CD8-positive, alpha-beta T cell (primary cell): ENCODE measurements at regions of chr11 and their contacts with region 1.

Region 1: DNA sequence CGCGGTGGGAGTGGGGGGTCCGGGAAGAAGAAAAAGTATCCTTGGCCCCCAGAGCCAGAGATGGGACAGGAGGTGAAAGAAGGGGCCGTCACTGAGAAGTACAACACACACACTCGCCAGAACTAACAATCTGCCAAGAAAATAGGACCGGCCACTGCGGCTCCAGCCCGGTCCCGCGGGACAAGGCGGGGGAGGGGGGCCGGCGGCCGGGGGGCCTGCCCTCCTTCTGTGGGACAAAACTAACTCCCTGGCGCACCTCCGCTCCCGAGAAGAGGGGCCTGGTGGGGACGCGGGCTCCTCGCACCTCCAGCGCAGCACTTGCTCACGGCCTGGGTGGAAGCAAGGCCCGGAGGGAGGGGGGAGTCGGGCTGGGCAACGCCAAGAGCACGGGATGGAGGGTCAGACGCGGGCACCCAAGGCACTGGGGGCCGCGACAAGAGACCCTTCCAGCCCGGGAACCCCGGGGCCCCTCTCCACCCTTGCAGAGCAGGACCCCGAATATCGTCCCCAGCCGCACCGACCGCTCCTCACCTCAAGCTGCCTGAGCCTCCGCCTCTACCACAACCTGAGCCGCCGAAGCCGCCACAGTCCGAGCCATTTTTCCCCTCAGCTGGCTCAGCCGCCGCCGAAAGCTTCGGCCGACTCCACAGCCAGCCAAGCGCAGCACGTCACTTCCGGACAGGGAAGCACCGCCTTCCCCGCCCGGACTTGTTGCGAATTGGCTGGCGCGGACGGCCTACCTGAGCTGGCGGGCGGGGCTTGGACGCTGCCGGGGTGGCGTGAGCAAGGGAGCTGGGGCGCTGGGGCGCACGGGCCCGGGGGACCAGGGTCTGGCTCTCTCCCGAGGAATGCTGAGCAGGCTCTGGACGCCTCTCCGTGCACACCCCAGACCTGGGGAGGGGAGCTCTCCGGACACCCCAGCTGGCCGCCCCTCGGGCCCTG is at the start of gene PIK3C2A:
- DNase-seq: peak; percentile 87 to 96 (median 94)
- ATAC-seq: peak; percentile 96
- H3K4me3 ChIP-seq: peak within 1 kb of the TSS; percentile 80 to 86
- H3K4me3 Mint-ChIP-seq: peak within 1 kb of the TSS; percentile 99
- H3K27ac ChIP-seq: peak within 1 kb of the TSS; percentile 76 to 88
- H3K27ac Mint-ChIP-seq: peak within 1 kb of the TSS; percentile 99
- H3K4me1 ChIP-seq: peaks cover 26% of the 10 kb centered on the region
- H3K4me1 Mint-ChIP-seq: peaks cover 47% of the 10 kb centered on the region
- H3K27me3 ChIP-seq: no peaks in the 10 kb centered on the region
- H3K27me3 Mint-ChIP-seq: no peaks in the 10 kb centered on the region
- CTCF ChIP-seq: no peak
- total RNA-seq, gene PIK3C2A: 50.8 to 54.3 TPM

Region 2: DNA sequence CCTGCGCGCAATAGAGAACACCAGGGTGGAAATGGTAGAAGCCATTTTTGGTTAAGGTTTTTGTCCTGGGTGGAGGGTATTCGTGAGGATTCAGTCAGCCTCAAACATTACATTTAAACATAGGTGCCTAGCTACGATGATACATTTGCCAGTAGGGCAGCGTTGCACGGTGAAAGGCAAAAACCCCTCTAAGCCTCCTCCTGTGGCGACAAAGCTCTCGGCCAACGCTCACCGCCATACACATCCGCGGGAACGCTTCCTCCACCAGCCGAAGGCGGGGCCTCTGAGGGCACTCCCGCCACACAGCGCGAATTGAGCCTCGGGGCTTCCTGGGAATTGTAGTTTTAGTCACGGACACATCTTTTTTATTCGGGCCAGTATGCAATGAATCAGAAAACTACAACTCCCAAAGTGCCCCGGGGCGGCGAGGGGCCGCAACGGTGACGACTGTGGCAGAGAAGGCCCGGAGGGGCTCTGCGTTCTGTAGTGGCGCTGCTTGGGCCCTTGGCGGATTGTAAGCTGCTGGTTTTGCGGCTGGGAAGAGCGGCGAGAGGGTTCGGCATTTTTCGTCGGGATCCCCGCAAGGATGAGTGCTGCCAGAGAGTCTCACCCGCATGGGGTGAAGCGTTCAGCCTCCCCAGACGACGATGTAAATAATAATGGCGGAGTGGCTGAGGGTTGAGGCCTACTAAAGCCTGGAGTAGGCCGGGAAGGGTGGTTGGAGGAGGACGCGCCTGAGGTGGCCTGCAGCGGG is 469.2 kb before region 1 on chr11 and contains the start of gene C11orf58:
- CTCF ChIA-PET with region 1: no interaction called
- POLR2A ChIA-PET with region 1: no interaction called
- intact Hi-C with region 1: loop called (anchors 1 to 2 kb)
- DNase-seq: peak; percentile 85 to 98 (median 96)
- ATAC-seq: peak; percentile 95
- H3K4me3 ChIP-seq: peak within 1 kb of the TSS; percentile 93 to 95
- H3K4me3 Mint-ChIP-seq: peak within 1 kb of the TSS; percentile 63
- H3K27ac ChIP-seq: peak within 1 kb of the TSS; percentile 99 to 100
- H3K27ac Mint-ChIP-seq: no peak within 1 kb of the TSS
- H3K4me1 ChIP-seq: peaks cover 35% of the 10 kb centered on the region
- H3K4me1 Mint-ChIP-seq: peaks cover 25% of the 10 kb centered on the region
- H3K27me3 ChIP-seq: no peaks in the 10 kb centered on the region
- H3K27me3 Mint-ChIP-seq: no peaks in the 10 kb centered on the region
- CTCF ChIP-seq: no peak
- total RNA-seq, gene C11orf58: 148 to 157 TPM

Region 3: DNA sequence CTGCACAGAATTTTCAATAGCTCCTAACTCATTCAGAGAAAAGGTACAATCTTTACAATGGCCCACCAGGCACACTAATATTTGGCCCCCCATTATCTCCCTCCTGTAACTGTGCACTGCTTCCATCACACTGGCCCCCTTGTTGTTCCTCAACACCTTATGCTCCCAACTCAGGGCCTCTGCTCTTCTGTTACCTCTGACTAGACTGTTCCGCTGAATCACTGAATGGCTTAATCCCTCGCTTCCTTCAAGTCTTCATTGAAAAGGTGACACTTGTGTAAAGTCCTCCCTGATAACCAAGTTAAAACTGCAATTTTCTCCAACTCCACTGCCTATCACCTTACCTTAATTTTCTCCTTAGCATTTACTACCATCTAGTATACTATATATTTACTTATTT is 21.6 kb before region 1 on chr11:
- CTCF ChIA-PET with region 1: no interaction called
- POLR2A ChIA-PET with region 1: no interaction called
- intact Hi-C with region 1: no loop called
- DNase-seq: no peak
- ATAC-seq: no peak
- H3K4me3 ChIP-seq: no peak overlapping the region
- H3K4me3 Mint-ChIP-seq: no peak overlapping the region
- H3K27ac ChIP-seq: no peak overlapping the region
- H3K27ac Mint-ChIP-seq: no peak overlapping the region
- H3K4me1 ChIP-seq: no peaks in the 10 kb centered on the region
- H3K4me1 Mint-ChIP-seq: peaks cover 28% of the 10 kb centered on the region
- H3K27me3 ChIP-seq: no peaks in the 10 kb centered on the region
- H3K27me3 Mint-ChIP-seq: no peaks in the 10 kb centered on the region
- CTCF ChIP-seq: no peak

Region 4: DNA sequence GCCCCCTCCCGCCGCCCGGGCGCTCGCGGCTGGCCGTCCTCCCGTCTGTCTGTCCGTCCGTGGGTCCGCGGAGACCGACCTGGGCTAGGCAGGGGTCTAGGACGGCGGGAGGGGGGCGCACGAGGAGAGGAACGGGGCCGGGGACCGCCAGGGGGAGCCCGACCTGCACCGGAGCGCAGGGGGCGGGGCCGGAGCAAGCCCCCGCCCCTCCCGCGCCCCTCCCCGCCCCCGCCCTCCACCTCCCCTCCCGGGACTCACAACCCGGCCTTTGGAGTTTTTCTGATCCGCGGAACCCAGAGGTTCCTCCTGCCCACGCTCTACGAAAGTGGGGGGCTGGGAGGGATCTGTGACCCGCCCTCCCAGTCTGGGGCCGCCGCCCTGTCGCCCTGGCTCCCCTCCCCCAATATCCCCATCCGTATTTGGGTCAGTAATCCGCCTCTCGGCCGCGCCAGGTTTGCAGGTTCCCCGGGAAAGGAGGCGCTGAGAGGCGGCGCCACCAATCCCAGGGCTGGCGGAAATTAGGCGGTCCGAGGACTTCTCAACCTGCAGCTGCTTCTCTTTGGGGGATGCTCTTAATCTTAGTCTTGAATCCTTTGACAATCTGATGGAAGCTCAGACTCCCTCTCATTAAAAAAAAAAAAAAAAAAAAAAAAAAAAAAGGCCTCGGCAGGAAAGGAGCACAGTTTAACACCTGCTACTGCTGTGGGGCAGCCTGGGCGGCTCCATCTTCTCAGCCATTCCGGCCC is 181.8 kb after region 1 on chr11:
- CTCF ChIA-PET with region 1: interaction called, 3 read pairs
- POLR2A ChIA-PET with region 1: no interaction called
- intact Hi-C with region 1: loop called in 1 of 2 experiments (anchors 1 kb)
- DNase-seq: peak; percentile 60 to 89 (median 83)
- ATAC-seq: peak; percentile 91
- H3K4me3 ChIP-seq: peak overlapping the region; percentile 69 to 75
- H3K4me3 Mint-ChIP-seq: peak overlapping the region; percentile 85
- H3K27ac ChIP-seq: no peak overlapping the region
- H3K27ac Mint-ChIP-seq: no peak overlapping the region
- H3K4me1 ChIP-seq: peaks cover 9% of the 10 kb centered on the region
- H3K4me1 Mint-ChIP-seq: peaks cover 8% of the 10 kb centered on the region
- H3K27me3 ChIP-seq: peaks cover 0 to 2% of the 10 kb centered on the region in 2 experiments
- H3K27me3 Mint-ChIP-seq: no peaks in the 10 kb centered on the region
- CTCF ChIP-seq: peak; percentile 71